WTC11 (cell line): ENCODE measurements at regions of chr16 and their contacts with region 1.

Region 1: GRCh38 chr16:352547-353403 is at the start of gene AXIN1:
- DNase-seq: peak; percentile 100
- ATAC-seq: peak; percentile 90
- H3K4me3 Mint-ChIP-seq: peak within 1 kb of the TSS; percentile 76
- H3K27ac Mint-ChIP-seq: no peak within 1 kb of the TSS
- H3K4me1 Mint-ChIP-seq: peaks cover 6% of the 10 kb centered on the region
- H3K27me3 Mint-ChIP-seq: no peaks in the 10 kb centered on the region; the same call in 1 of the 2 replicates
- CTCF ChIP-seq: peak; percentile 52
- total RNA-seq, gene AXIN1: 48.0 to 50.3 TPM (median 48.9 TPM) in 3 replicates

Region 2: GRCh38 chr16:72561-73548 is 279.9 kb before region 1 on chr16 and contains the start of gene RHBDF1:
- CTCF ChIA-PET with region 1: interaction called, 12 read pairs
- POLR2A ChIA-PET with region 1: no interaction called
- DNase-seq: peak; percentile 74
- ATAC-seq: peak; percentile 43
- H3K4me3 Mint-ChIP-seq: peak within 1 kb of the TSS; percentile 81
- H3K27ac Mint-ChIP-seq: peak within 1 kb of the TSS; percentile 96
- H3K4me1 Mint-ChIP-seq: peaks cover 61% of the 10 kb centered on the region
- H3K27me3 Mint-ChIP-seq: no peaks in the 10 kb centered on the region; the same call in 1 of the 2 replicates
- CTCF ChIP-seq: no peak
- total RNA-seq, gene RHBDF1: 40.9 to 60.8 TPM (median 44.2 TPM) in 3 replicates

Region 3: DNA sequence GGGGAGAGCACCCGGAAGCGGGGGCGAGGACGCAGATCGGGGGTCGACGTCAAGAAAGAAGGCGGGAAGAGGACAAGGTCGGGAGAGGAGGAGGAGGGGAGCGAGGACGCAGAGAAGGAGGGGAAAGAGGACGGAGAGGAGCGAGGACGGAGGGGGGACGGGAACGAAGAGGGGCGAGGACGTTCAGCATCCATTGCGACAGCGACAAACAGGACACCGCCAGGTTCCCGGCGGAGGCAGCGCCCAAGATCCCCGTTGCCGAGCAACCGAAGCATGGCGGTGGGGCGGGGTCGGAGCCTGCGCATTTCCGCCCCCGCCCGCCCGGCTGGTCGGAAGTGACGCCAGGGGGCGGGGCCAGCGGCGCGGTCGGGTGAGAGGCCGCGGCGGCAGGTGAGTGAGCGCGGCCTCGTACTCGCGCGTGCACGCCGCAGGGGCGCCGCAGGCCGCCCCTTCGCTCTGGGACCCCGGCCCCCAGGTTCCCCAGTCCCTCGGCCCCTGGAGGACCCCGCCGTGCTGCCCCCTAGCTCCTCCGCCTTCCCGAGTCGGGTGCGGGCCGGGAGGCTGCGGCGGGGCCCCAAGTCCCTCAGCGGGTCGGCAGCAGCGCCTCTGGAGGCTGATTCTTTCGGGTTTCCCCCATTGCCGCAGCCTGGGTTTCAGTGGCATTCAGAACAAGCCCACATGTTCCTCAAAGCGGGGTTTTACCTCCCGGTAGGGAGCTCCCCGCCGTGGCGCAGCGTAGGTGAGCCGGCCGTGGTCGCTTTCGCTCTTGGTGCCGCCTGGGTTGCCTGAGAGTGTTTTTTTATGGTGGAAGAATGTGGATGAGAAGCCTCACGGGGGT is 118.1 kb before region 1 on chr16 and contains the start of gene FAM234A:
- CTCF ChIA-PET with region 1: interaction called, 11 read pairs
- POLR2A ChIA-PET with region 1: no interaction called
- DNase-seq: peak; percentile 95
- ATAC-seq: peak; percentile 73
- H3K4me3 Mint-ChIP-seq: peak within 1 kb of the TSS; percentile 99
- H3K27ac Mint-ChIP-seq: peak within 1 kb of the TSS; percentile 99
- H3K4me1 Mint-ChIP-seq: peaks cover 5% of the 10 kb centered on the region; the same call in 1 of the 2 replicates
- H3K27me3 Mint-ChIP-seq: 0 out of 2 replicates have a peak, but pooled peaks cover 3% of the 10 kb centered on the region
- CTCF ChIP-seq: no peak
- total RNA-seq, gene FAM234A: 115 to 140 TPM (median 137 TPM) in 3 replicates

Region 4: DNA sequence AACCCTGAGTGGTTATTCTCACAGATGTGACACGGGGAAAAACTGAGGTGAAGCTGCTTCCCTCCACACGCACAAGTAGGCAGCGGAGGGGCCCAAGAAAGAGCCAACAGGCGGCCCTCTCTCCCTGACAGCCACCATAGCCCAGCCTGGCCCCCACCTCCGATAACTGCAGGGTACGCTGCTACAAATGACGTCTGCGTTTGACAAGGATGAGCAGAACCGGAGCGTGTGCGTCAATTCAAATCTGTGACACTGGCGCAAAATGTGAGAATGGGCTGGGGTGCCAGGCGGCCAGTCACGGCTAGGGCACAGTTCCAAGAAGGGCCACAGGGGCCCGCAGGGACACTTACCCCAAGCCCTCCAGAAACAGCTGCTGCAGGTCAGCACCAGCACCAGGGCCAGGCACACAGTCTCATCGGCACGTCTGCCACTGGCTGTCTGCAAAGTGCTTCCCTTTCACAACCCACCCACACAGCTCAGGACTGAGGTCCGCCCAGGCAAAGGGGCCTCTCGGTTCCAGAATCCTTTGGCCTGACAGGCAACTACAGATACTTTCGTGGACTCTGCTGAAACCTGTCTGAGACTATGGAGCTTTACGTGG is 14.7 kb before region 1 on chr16:
- CTCF ChIA-PET with region 1: interaction called, 24 read pairs
- POLR2A ChIA-PET with region 1: interaction called, 4 read pairs
- DNase-seq: no peak
- ATAC-seq: no peak
- H3K4me3 Mint-ChIP-seq: no peak overlapping the region
- H3K27ac Mint-ChIP-seq: no peak overlapping the region
- H3K4me1 Mint-ChIP-seq: peaks cover 11% of the 10 kb centered on the region
- H3K27me3 Mint-ChIP-seq: no peaks in the 10 kb centered on the region
- CTCF ChIP-seq: no peak

Region 5: DNA sequence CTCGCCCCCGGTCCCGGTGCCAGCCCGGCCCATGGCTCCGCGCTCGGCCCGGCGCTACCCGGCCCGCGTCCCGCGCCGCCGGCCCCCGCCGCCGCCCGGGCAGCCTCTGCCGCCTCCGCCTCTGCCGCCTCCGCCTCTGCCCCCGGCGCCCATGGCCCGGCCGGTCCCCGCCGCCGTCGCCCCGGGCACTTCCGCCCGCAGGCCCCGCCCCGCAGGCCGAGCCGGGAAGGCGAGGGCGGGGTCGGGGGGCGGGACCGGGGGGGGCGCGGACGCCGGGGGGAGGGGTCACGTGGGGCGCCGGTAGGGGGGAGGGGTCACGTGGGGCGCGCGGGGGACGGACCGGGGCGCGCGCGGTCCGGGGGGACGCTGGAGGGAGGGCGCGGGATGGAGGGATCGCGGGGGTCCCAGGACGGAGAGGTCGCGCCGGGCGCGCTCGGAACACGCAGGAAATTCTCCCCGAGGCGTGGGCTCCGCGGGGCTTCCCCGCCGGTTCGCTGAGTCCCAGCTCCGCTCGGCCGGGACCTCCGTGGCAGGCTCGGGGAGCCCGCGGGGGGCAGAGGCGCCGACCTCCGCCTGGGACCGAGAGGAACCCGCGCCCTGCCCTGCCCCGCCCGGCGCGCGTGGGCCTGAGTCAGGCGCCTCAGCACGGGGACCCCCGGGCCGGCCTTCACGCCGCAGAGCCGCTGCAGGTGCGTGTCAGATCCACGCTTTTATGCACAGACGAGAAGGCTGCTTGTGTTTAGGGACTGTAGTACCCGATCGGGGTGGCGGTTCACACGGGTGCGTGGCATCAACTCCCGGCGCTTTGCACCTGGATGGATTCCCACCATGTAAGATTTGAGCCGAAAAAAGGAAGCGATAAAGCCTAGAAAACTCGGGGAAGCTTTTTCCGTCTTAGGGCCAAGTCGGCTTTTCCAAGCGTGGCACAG is 29.3 kb after region 1 on chr16 and contains the start of gene PGAP6:
- CTCF ChIA-PET with region 1: interaction called, 15 read pairs
- POLR2A ChIA-PET with region 1: no interaction called
- DNase-seq: peak; percentile 57
- ATAC-seq: no peak
- H3K4me3 Mint-ChIP-seq: peak within 1 kb of the TSS; percentile 79
- H3K27ac Mint-ChIP-seq: peak within 1 kb of the TSS; percentile 98
- H3K4me1 Mint-ChIP-seq: peaks cover 40% of the 10 kb centered on the region
- H3K27me3 Mint-ChIP-seq: no peaks in the 10 kb centered on the region
- CTCF ChIP-seq: no peak
- total RNA-seq, gene PGAP6: 104 to 108 TPM (median 107 TPM) in 3 replicates